ENCODE measurements at regions of chr12 and their contacts with region 1.

Region 1: DNA sequence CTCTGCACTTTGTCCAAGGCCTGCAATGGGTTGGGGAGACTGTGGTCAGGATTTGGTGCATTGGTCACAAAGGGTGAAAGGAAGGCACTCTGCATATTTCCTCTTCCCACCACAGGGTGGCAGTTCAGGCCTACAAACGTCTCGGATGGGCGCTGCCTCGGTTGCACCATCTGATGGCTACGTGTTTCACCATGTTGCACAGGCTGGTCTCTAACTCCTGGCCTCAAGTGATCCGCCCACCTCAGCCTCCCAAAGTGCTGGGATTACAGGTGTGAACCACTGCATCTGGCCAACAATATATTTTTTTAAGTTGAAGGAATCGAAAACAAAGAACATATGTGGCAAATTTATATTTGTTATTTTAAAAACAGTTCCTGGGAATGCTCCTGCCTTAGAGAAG is 35.1 kb downstream of the TMBIM6 start:
- DNase-seq: peak; percentile 80
- ATAC-seq: peak; percentile 94

Region 2: GRCh38 chr12:49842519-49843352 is 66.3 kb after region 1 on chr12 and contains the start of gene BCDIN3D:
- intact Hi-C with region 1: loop called (anchors 2 kb)
- DNase-seq: peak; percentile 97
- ATAC-seq: peak; percentile 99
- total RNA-seq, gene BCDIN3D: 2.4 TPM

Region 3: GRCh38 chr12:49866859-49867579 is 90.6 kb after region 1 on chr12:
- intact Hi-C with region 1: no loop called
- DNase-seq: peak; percentile 87
- ATAC-seq: peak; percentile 45

Region 4: DNA sequence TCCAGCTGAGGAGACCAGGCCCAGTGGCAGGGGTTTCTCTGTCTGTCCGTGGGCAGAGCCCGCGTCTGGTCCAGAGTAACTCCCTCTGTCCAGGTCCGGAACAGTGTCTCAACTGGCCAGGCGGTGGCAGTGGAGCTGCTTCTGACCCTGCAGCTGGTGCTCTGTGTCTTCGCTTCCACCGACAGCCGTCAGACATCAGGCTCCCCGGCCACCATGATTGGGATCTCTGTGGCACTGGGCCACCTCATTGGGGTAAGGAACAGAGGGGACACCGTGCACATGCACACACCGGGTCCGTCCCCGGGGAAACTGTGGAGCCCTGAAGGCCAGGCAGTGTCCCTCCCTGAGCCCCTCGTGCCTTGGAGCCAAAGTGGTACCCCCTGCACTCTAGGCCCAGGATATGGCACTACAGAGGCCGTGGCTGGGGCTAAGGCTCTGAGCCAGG is 197.8 kb after region 1 on chr12:
- intact Hi-C with region 1: loop called (anchors 10 kb)
- DNase-seq: peak; percentile 84
- ATAC-seq: peak; percentile 93

Measured in Right ventricle myocardium superior (tissue), 1 donor.